GM10248 (cell line): ENCODE measurements at regions of chr1 and their contacts with region 1.

Region 1: GRCh38 chr1:226697151-226697939 is 41.7 kb downstream of the ITPKB start:
- DNase-seq: peak; percentile 55
- CTCF ChIP-seq: no peak

Region 2: GRCh38 chr1:226679853-226680516 is 17.4 kb before region 1 on chr1:
- CTCF ChIA-PET with region 1: interaction called, 16 read pairs
- POLR2A ChIA-PET with region 1: no interaction called
- DNase-seq: peak; percentile 81
- CTCF ChIP-seq: no peak